ENCODE measurements at regions of chr5 and their contacts with region 1.

Region 1: GRCh38 chr5:43105369-43106289 is 15.1 kb upstream of the ZNF131 start:
- DNase-seq: peak; percentile 96
- H3K4me3 Mint-ChIP-seq: peak overlapping the region; percentile 87
- H3K27ac Mint-ChIP-seq: peak overlapping the region; percentile 90
- H3K4me1 Mint-ChIP-seq: peaks cover 39% of the 10 kb centered on the region
- H3K27me3 Mint-ChIP-seq: no peaks in the 10 kb centered on the region

Region 2: GRCh38 chr5:42994246-42995151 is 111.1 kb before region 1 on chr5:
- intact Hi-C with region 1: loop called (anchors 1 kb)
- DNase-seq: peak; percentile 97
- H3K4me3 Mint-ChIP-seq: peak overlapping the region; percentile 96
- H3K27ac Mint-ChIP-seq: peak overlapping the region; percentile 100
- H3K4me1 Mint-ChIP-seq: peaks cover 40% of the 10 kb centered on the region
- H3K27me3 Mint-ChIP-seq: no peaks in the 10 kb centered on the region

Region 3: GRCh38 chr5:43040287-43041098 is 65.1 kb before region 1 on chr5 and contains the start of gene ANXA2R:
- intact Hi-C with region 1: loop called (anchors 2 kb)
- DNase-seq: peak; percentile 98
- H3K4me3 Mint-ChIP-seq: peak within 1 kb of the TSS; percentile 94
- H3K27ac Mint-ChIP-seq: peak within 1 kb of the TSS; percentile 96
- H3K4me1 Mint-ChIP-seq: peaks cover 46% of the 10 kb centered on the region
- H3K27me3 Mint-ChIP-seq: no peaks in the 10 kb centered on the region
- total RNA-seq, gene ANXA2R: 1.1 and 1.2 TPM in 2 replicates

Region 4: DNA sequence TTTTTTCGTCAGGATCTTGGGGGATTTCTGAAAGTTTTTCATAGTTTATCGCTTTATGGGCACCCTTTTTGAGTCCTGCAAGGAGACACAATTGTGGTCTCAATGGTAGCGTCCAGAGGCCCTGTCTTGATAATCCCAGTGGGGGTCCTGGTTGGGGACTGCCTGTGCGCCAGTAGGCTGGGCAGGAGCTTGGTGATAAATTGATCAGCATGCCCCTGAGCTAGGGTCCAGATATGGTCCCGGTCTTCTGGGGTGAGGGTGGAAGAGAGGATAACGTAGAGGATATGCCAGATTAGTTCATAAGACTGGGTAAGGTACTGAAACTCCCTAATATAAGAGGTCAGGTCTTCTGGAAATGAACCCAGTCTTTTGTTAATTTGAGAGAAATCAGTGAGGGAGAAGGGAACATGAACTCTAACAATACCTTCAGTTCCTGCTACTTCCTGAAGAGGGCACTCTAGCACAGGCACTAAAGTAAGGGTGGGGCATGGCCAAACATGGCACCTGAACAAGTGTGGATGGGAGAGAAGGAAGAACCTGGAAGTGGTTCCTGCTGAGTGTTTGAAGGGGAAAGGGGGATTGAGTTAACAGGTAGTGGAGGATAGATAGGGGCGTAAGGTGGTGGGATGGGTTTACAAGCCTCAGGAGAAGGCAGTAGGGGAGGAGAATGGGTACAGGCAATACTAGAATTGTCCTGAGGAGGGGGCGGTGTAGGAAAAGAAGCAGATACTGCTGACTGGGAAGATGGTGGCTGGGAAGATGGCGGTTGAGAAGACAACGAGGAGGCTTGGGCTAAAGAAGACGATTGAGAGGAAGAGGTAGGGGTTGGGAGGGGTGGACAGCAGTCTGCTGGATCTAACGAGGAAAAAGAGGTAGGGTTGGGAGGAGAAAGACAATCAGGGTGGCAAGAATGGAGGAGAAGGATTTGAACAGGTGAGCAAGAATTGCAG is 31.8 kb before region 1 on chr5:
- intact Hi-C with region 1: loop called (anchors 1 kb)
- DNase-seq: peak; percentile 89
- H3K4me3 Mint-ChIP-seq: peak overlapping the region; percentile 7
- H3K27ac Mint-ChIP-seq: peak overlapping the region; percentile 79
- H3K4me1 Mint-ChIP-seq: peaks cover 38% of the 10 kb centered on the region
- H3K27me3 Mint-ChIP-seq: no peaks in the 10 kb centered on the region

Region 5: DNA sequence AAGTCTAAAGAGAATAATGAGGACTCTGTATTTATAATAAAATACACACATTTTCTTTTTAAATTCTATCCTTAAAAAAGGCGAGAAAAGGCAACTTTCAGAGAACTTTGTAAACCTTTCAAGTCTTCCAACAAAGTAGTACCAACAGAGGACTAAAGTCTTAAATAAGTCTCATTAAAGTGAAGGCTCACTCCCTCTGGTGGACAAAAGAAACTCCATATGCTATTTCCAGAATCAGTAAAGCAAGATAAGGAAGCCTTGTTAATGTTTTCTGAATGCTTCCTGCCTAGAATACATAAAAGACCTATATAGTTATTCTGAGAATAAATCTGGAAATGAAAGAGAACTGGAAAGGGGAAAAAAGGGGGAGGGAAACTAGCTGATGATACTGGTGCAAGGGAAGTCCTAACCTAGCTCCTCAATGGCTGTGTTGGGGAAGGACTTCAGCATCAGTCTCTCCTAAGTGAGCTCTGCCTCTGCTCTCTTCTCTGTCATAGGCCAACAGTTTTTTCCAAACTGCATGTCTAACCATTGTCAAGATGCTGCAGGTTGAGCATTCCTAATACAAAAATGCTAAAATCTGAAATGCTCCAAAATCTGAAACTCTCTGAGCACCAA is 200.4 kb after region 1 on chr5:
- intact Hi-C with region 1: loop called (anchors 1 kb)
- DNase-seq: peak; percentile 76
- H3K4me3 Mint-ChIP-seq: peak overlapping the region; percentile 5
- H3K27ac Mint-ChIP-seq: peak overlapping the region; percentile 50
- H3K4me1 Mint-ChIP-seq: peaks cover 71% of the 10 kb centered on the region
- H3K27me3 Mint-ChIP-seq: no peaks in the 10 kb centered on the region

Region 6: DNA sequence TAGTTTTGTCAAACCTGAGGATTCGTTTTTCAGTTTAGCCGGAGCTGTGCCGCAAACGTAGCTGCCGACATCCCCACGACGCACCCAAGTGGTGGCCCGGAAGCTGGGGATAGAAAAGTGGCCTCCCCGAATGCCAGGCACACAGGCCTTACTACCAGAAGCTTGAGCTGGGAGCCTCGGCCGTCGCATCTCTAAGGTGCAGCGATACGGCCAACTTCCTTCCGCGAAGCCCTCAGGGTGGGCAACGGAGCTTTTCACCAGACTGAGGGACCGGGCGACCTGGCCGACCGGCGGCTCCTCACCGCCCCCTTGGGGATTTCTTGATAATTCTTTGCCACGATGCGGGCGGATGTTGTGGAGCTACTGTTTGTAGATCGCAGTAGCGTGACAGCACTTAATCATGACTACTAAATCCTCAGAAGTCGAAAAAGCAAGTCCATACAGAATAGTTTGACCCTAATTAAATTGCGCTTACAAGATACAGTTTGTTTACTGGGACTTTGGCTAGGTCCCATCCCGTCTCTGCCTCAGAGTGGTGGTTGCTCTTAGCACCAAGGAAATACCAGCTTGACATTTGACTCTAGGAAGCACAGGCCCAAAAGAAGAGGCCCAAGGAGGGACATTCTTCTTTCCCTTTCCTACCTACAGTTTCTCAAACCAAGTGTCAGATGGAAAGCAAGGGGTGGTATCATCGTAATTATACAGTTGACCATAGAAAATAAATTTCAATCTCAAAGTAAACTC is 378.6 kb after region 1 on chr5:
- intact Hi-C with region 1: loop called (anchors 1 kb)
- DNase-seq: peak; percentile 96
- H3K4me3 Mint-ChIP-seq: peak overlapping the region; percentile 94
- H3K27ac Mint-ChIP-seq: peak overlapping the region; percentile 100
- H3K4me1 Mint-ChIP-seq: peaks cover 23% of the 10 kb centered on the region
- H3K27me3 Mint-ChIP-seq: no peaks in the 10 kb centered on the region

Region 7: DNA sequence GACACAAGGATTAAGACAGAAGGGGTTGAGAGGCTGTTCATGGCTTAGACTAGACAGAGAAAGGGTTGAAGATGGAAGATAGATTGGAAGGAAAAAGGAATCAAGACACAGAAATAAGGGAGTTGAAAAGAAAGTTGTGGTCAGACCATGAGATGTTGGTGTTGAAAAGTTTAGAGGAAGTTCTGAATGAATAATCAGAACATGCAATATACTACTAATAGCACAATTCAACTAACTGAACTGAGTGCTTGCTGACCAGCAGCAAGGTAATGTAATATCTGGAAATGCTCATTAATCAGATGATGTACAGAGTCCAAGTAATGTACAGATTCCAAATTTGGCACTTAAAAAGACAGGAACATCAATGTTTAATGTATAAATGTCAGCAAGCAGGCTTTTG is 486.7 kb after region 1 on chr5:
- intact Hi-C with region 1: no loop called
- DNase-seq: no peak
- H3K4me3 Mint-ChIP-seq: no peak overlapping the region
- H3K27ac Mint-ChIP-seq: no peak overlapping the region
- H3K4me1 Mint-ChIP-seq: no peaks in the 10 kb centered on the region
- H3K27me3 Mint-ChIP-seq: no peaks in the 10 kb centered on the region